GM13976 (cell line): ENCODE measurements at regions of chr19 and their contacts with region 1.

Region 1: DNA sequence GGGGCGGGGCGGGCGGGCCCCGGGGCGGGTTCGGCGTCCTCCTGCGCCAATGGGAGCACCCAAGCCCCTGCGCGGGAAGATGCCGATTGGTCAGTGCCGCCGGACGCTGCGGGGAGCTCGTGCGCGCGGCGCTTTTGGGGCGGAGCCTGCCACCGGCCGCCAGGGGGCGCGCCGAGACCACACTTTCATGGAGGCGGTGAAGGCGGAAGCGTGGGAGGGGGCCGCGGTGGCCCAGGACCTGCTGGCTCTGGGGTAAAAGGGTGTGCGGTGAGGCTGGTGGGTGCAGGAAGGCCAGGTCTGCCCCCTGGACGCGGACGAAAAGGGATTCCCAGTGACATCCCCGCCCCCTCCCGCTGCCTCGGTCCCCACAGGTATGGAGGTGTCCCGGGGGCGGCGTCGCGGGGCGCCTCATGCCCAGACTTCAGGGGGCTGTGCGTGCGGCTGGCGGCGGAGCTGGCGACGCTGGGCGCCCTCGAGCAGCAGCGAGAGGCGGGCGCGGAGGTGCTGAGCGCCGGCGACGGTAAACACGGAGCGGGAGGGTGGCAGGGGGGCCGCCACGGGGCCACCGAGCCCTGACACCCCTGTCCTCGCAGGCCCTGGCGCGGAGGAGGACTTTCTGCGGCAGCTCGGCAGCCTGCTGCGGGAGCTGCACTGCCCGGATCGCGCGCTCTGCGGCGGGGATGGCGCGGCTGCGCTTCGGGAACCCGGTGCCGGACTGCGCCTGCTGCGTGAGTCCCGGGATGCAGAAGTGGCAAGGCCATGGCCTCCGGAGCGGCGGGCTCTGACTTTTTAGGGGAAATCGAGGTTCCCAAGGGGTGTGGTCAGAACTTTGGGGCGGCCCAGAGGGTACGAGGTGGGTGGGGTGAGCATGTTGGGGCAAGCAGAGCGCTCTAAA is at the start of gene FAM98C:
- DNase-seq: peak; percentile 100
- CTCF ChIP-seq: peak; percentile 99

Region 2: DNA sequence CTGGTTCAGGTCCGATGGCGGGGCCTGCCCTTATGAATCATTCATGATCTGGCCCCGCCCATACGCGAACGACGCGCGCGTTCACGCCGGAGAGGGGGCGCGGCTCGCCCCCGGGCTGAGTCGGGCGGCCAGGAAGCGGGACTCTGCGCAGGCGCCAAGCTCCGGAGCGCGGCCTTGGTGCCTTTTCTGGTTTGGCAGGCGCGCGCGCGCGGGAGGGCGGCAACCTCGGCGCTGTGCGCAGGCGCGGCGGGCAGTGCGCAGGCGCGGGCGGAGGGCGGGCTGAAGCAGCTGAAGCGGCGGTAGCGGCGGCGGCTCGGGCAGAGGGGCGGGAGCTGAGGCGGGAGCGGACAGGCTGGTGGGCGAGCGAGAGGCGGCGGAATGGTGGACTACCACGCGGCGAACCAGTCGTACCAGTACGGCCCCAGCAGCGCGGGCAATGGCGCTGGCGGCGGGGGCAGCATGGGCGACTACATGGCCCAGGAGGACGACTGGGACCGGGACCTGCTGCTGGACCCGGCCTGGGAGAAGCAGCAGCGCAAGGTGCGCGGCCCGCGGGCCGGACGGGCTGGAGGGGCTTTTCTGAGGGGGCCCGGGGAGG is 244.3 kb after region 1 on chr19 and contains the start of gene ACTN4:
- in situ Hi-C with region 1: loop called (anchors 25 kb)
- DNase-seq: peak; percentile 99
- CTCF ChIP-seq: no peak

Region 3: DNA sequence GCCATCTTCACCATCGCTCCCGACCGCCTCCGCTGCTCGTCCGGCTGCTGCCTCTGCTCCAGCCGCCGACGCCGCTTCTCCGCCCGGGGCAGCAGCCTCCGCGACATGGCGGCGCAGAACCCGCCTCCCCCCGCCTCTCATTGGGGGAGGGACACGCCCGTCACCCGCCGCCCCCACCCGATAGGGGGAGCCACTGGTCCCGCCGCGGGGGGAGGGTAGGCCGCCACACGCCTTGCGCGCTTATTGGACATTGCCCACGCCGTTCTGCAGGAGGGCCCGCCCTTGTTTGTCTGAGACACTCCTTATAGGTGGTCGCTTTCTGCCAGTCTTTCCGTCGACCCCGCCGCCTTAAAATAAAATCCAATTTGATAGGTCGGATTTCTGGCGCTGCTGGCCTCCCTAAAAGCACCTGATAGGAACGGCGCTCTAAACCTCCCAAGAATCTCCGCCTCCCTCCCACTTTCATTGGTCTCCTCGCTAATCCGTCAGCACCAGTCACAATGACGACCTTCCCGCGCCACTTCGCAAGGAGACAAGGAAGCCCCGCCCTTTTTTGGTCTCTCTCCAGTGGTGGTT is 446.7 kb after region 1 on chr19 and contains the start of gene HNRNPL:
- in situ Hi-C with region 1: no loop called
- DNase-seq: peak; percentile 94
- CTCF ChIP-seq: peak; percentile 40